ENCODE measurements at regions of chr12 and their contacts with region 1.

Region 1: DNA sequence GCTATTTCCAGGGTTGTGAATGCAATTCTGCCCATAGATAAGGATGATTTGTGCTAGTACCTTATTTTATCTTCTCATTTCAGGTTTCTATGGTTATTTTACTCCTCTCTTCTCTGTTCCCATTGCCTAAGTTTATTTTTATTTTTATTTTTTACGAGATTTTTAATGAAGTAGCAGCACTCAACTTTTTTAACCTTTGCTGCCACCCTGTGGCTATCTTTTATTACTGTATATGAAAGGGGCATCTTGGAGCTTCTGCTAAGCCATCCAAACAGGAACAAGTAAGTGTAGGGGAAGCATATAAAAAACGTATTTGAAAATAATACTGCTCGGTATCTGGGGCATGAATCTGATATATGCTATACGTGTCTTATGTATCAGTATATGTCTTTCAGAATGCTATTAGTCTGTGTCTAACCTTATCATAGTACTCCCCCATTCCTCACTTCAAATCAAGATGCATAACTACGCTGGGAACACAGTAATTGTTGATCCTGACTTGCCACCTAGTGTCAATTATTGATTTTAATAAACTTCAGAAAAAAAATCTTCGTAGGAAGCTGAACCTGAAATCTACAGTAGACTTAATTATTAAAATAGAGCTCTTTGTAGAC is 60.3 kb downstream of the KLRG1 start:
- DNase-seq: peak; percentile 25

Region 2: DNA sequence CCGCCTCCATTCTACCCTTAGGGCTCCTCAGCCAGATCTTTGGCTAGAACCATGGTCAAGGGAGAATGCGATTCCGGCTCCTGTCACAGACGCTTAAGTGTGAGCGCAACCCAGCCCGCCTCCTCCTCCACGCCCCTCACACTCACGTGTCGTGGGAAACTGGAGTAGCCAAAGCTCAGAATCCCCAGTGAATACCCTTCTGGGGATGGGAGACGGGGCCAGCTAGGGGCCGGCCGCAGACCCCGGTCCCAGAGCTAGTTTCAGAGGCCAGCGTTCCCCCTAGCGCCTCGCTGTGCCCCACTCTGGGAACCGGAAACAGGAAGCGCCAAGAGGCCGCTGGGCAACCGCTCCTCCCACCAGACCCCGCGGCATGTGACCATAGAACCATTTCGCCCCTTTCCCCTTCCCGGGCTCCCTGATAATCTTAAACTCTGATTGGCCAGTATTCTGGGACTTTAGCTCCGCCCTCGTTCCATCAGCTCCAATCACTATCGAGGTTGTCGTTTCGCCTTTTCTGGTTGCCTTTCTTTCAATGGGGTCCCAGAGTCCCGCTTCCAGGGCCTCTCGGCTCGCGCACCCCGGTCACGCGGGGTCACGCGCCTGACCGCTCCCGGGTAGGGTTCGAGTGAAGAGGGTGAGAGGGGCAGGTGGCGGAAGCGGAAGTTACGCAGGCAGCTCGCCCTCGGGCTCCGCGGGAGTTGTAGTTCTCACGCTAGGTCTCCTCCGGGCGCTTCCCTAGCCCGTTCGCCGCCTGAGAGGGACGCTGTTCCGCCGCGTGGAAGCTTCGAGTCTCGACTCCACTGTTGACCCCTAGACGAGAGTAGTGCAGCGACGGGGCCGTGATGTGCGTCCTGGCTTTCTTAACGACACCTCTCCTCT is 100.0 kb before region 1 on chr12 and contains the start of gene M6PR:
- CTCF ChIA-PET with region 1: interaction called, 13 read pairs
- POLR2A ChIA-PET with region 1: interaction called, 7 read pairs
- DNase-seq: peak; percentile 92

Region 3: GRCh38 chr12:8996682-8997360 is 52.8 kb before region 1 on chr12:
- CTCF ChIA-PET with region 1: no interaction called
- POLR2A ChIA-PET with region 1: no interaction called
- DNase-seq: no peak

Region 4: GRCh38 chr12:9064201-9064814 is 14.7 kb after region 1 on chr12:
- CTCF ChIA-PET with region 1: interaction called, 10 read pairs
- POLR2A ChIA-PET with region 1: interaction called, 7 read pairs
- DNase-seq: peak; percentile 71